HCT116 (cell line): ENCODE measurements at regions of chr16 and their contacts with region 1.

Region 1: GRCh38 chr16:56789360-56789759 is 59.4 kb downstream of the NUP93 start:
- DNase-seq: peak; percentile 55
- ATAC-seq: peak; percentile 88
- H3K4me3 ChIP-seq: no peak overlapping the region
- H3K27ac ChIP-seq: no peak overlapping the region
- H3K4me1 ChIP-seq: no peaks in the 10 kb centered on the region
- H3K27me3 ChIP-seq: no peaks in the 10 kb centered on the region
- CTCF ChIP-seq: peak; percentile 59 to 65 (median 62); a peak in 5 of 6 replicates
- POLR2A ChIP-seq: no peak
- RAD21 ChIP-seq: peak; percentile 82

Region 2: DNA sequence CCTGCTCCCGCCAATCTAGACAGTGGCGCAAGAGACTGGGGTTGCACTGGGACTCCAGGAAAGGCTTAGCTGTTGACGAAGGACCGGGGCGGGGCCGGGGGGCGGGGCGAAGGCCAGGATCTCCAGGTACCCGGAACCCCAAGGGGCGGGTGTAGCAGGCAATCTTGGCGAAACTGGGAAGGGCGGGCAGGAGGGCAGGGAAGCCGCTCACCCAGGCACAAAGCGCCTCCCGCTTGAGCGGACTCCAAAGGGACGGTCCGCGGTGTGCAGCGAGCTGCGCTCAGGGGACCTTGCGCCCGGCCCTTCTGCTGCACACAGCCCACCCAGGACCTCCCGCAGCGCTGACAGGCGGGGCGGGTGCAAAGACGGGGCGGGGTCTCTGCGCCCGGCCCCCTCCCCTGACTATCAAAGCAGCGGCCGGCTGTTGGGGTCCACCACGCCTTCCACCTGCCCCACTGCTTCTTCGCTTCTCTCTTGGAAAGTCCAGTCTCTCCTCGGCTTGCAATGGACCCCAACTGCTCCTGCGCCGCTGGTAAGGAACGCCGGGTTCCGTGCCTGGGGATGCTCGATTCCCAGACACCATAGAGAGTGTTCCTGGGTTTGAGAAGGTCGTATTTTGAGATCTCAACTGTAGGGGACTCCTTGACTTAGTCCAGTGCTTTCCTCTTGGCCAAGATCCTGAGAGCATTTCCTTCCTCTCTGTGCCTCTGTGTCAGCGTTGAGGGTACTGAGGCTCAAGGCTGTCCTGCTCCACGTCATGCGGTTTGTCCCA is 131.6 kb before region 1 on chr16 and contains the start of gene MT1F:
- CTCF ChIA-PET with region 1: no interaction called
- POLR2A ChIA-PET with region 1: no interaction called
- RAD21 ChIA-PET with region 1: no interaction called
- intact Hi-C with region 1: no loop called
- DNase-seq: peak; percentile 83
- ATAC-seq: peak; percentile 87
- H3K4me3 ChIP-seq: peak within 1 kb of the TSS; percentile 47 to 55
- H3K27ac ChIP-seq: no peak within 1 kb of the TSS; the same call in 1 of the 2 replicates
- H3K4me1 ChIP-seq: peaks cover 26 to 54% of the 10 kb centered on the region in 2 experiments
- H3K27me3 ChIP-seq: no peaks in the 10 kb centered on the region
- CTCF ChIP-seq: no peak
- POLR2A ChIP-seq: no peak
- RAD21 ChIP-seq: peak; percentile 37
- total RNA-seq, gene MT1F: 7.3 TPM

Region 3: DNA sequence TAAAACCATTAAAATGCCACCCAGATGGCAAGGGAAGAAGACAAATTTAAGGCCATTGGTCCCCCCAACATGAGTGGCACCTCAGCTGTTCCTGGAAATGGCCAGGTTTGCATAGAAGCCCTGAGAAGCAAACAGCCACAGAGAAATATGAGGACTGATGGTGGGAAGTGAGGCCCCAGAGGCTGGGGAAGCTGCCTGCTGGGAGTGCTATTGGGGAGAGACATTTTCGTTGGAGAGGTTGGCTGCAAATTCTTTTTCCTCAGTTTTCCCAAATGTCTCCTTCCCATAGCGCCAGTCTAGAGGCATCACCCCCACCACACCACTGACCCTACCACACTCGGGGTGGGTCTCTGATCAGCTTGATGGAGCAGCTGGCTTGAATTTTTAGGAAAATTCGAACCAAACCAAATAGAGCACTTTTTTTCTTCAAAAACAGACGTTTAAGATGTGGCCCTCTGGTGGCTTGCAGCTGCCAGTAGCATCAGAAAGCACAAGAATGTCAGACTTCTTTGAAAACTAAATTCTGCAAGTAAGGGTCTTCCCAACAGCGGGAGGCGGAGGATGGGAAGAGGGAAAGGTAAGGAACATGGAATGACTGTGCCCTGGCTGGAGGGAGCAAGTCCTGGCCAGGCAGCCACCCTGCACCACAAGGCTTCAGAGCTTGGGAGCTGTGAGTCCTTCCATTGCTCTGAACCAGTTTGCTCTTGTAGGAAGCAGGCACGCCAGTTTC is 62.5 kb after region 1 on chr16:
- CTCF ChIA-PET with region 1: interaction called, 15 read pairs
- POLR2A ChIA-PET with region 1: no interaction called
- RAD21 ChIA-PET with region 1: no interaction called
- intact Hi-C with region 1: no loop called
- DNase-seq: no peak
- ATAC-seq: no peak
- H3K4me3 ChIP-seq: no peak overlapping the region
- H3K27ac ChIP-seq: no peak overlapping the region
- H3K4me1 ChIP-seq: peaks cover 22 to 41% of the 10 kb centered on the region in 2 experiments
- H3K27me3 ChIP-seq: no peaks in the 10 kb centered on the region
- CTCF ChIP-seq: peak; percentile 30 to 63 (median 59); a peak in 5 of 6 replicates
- POLR2A ChIP-seq: no peak
- RAD21 ChIP-seq: peak; percentile 41

Region 4: DNA sequence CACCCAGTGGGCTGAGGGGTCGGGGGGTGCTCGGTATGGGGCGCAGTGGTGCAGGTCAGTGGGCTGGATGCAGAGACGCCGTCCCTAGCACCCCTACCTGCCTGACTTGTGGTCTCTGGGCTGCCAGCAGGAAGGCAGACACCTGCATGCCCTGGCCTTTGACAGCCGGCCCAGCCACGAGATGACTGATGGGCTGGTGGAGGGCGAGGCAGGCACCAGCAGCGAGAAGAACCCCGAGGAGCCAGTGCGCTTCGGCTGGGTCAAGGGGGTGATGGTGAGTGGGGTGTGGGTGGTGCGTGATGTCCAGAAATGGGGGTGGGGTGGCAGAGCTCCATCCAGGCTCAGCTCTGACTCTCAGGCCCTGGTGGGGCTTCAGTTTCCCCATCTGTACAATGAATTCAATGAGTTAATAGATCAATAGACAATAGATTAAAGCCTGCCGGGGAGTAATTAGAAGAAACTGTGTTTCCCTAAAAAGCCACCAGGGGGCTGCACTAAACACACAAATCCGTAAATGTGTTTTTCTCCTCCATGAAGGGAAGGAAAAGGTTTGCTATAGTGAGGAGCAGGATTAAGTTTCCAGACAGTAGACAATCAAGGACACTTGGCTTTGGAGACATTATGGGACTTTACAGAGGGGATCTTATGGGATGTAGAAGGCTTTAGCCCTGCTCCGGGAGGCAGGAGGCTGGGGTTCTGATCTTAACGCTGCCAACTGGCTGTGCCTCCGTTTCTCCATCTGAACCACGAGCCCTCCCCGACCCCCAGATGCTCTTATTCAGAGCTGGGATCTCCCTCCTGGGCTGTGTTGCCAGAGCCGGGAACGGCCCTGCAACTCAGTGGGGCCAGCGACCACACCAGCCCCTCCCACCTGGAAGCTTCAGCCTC is 77.8 kb after region 1 on chr16:
- CTCF ChIA-PET with region 1: interaction called, 8 read pairs
- POLR2A ChIA-PET with region 1: no interaction called
- RAD21 ChIA-PET with region 1: no interaction called
- intact Hi-C with region 1: loop called (anchors 1 kb)
- DNase-seq: peak; percentile 43
- ATAC-seq: peak; percentile 41
- H3K4me3 ChIP-seq: no peak overlapping the region
- H3K27ac ChIP-seq: no peak overlapping the region
- H3K4me1 ChIP-seq: peaks cover 0 to 5% of the 10 kb centered on the region in 2 experiments; a peak in 2 of 4 replicates
- H3K27me3 ChIP-seq: no peaks in the 10 kb centered on the region
- CTCF ChIP-seq: peak; percentile 64 to 84 (median 73)
- POLR2A ChIP-seq: no peak
- RAD21 ChIP-seq: peak; percentile 72

Region 5: GRCh38 chr16:56950881-56951771 is 161.8 kb after region 1 on chr16:
- CTCF ChIA-PET with region 1: interaction called, 6 read pairs
- POLR2A ChIA-PET with region 1: no interaction called
- RAD21 ChIA-PET with region 1: no interaction called
- intact Hi-C with region 1: loop called (anchors 1 kb)
- DNase-seq: no peak
- ATAC-seq: peak; percentile 97
- H3K4me3 ChIP-seq: no peak overlapping the region
- H3K27ac ChIP-seq: no peak overlapping the region
- H3K4me1 ChIP-seq: no peaks in the 10 kb centered on the region
- H3K27me3 ChIP-seq: no peaks in the 10 kb centered on the region
- CTCF ChIP-seq: peak; percentile 71 to 81 (median 73)
- POLR2A ChIP-seq: no peak
- RAD21 ChIP-seq: peak; percentile 84

Region 6: DNA sequence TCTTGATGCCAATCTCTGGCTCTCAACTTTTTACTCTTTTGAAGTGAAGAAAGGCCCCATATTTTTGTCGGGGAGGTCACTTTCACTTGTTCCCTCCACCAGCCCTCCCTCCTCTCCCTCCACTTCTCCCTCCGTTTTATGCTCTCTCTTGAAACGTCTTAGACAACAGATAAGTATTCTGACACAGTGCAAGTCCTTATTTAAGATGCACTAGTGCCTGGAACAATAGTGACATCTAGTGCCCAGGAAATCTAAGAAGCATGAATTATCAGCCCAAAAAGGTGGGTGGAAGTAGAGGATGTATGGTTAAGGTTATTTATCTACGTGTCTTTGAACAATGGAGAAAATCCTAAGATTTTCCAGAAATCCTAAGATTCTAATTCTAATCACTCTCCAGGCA is 378.6 kb after region 1 on chr16:
- CTCF ChIA-PET with region 1: no interaction called
- POLR2A ChIA-PET with region 1: no interaction called
- RAD21 ChIA-PET with region 1: no interaction called
- intact Hi-C with region 1: loop called (anchors 2 kb)
- DNase-seq: peak; percentile 36
- ATAC-seq: peak; percentile 73
- H3K4me3 ChIP-seq: no peak overlapping the region
- H3K27ac ChIP-seq: no peak overlapping the region
- H3K4me1 ChIP-seq: no peaks in the 10 kb centered on the region
- H3K27me3 ChIP-seq: no peaks in the 10 kb centered on the region
- CTCF ChIP-seq: peak; percentile 44 to 82 (median 64); a peak in 5 of 6 replicates
- POLR2A ChIP-seq: no peak
- RAD21 ChIP-seq: peak; percentile 81